BJ (cell line): ENCODE measurements at regions of chr14 and their contacts with region 1.

Region 1: DNA sequence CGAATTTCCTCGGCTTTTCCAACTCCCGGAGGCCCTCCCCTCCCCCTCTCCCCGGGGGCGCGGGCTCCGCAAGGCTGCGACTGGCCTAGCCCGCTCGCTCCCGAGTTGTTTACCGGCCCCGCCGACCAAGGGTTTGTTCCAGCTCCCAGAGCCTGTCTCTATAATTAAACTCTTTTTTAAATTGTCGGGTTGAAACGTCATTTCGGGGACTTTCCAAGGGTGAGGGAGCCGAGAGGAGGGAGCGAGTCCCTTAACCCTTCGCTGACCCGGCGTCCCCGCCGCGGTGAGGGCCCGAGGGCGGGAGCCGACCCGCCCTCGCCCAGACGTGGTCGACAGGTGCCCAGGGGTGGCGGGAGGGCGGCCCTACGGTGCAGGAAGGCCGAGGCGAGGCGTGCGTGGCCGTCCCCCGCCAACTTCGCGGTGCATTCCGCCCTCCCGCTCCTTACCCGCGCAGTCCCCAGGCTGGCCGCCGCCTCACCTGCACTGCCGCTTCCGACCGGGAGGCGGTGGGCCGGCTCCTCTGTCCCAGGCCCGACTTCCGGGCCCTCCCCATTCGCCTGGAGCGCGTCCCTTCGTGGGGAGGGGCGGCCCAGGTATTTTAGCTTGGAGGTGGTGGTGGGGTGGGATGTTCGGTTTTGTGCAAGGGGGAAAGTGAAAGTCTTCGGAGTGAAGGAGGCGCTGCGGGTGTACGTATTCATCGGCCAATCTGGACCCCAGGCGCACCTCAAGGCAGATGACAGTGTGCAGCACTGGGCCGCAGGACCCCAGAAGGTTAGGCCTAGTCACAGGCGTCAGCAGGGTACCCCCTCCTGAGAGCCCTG is 2.9 kb upstream of the ZFP36L1 start:
- DNase-seq: no peak
- H3K4me3 ChIP-seq: peak overlapping the region; percentile 60
- H3K27me3 ChIP-seq: no peaks in the 10 kb centered on the region
- CTCF ChIP-seq: peak; percentile 79

Region 2: DNA sequence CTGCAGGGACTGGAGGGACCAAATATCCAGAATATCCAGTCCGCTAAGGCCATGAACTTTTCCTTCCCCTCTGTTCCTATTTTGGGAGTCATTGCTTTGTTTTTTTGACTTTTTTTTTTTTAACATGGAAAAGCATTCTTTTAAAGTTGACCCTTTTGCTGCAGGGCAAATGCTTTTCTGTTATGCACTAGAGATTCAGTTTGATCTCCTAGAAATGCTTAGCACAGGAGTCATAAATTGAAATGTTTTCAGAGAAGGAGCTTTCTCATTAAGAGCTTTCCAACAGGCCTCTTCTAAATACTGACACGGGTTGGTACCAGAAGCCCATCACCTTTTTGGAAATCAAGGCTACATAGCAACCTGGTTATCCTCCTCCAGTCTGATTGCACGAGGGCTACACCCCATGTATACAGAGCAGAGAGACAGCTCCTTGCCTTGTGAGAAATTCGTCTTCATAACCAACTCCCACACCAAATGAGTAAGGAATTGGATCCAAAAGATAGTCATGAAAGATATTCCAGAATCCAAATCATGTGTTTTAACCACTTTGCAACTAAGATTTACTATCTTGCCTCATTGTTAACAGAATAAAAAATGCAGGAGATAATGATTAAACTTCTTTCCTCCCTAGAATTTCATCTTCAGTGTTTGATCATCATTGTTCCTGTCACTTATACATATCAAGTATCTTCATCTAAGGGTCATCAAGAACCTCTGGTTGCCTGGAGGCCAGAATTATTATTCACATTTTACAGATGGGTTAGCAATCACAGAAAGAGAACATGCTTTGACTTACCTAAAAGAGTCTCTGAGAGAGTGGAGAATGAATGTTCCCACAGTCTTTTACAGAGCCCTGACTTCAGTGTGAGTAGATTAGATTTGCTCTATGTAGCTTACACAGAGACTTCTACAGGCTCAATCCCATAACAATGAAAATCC is 392.3 kb before region 1 on chr14:
- CTCF ChIA-PET with region 1: no interaction called
- POLR2A ChIA-PET with region 1: interaction called, 11 read pairs
- DNase-seq: peak; percentile 50
- H3K4me3 ChIP-seq: no peak overlapping the region
- H3K27me3 ChIP-seq: no peaks in the 10 kb centered on the region
- CTCF ChIP-seq: no peak

Region 3: GRCh38 chr14:68695326-68695768 is 100.5 kb before region 1 on chr14:
- CTCF ChIA-PET with region 1: no interaction called
- POLR2A ChIA-PET with region 1: interaction called, 19 read pairs
- DNase-seq: peak; percentile 99
- H3K4me3 ChIP-seq: no peak overlapping the region
- H3K27me3 ChIP-seq: no peaks in the 10 kb centered on the region
- CTCF ChIP-seq: no peak

Region 4: DNA sequence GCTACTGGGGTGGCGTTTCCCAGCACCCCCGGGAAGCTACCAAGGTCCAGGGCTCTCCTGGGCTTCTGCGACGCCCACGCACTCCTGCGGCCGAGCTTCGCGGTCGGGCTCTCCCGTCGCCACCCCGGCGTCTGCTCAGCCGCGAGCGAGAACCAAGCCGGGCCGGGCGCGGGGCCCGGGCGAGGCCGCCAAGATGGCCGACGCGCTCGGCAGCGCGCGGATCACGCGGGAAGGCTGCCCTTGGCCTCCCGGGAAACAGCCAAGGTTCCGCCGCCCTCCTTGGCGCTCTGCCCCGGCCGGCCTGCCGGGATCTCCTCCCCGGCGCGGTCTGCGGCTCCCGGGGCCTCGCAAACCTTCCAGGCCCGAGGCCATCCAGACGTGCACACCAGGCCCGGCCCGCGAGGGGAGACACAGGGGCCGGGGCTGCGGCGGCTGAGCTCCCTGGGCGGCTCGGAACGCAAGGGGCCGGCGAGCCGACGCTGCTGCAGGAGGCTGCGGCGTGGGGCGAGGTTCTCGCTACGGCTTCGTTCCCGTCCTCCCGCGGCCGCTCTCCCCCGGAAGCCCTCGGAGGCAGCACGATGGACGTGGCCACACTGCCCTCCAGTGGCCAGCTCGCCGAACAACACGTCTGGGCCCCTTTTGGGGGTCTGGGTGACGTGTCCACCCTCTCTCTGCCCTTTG is 20.6 kb after region 1 on chr14:
- CTCF ChIA-PET with region 1: interaction called, 13 read pairs
- POLR2A ChIA-PET with region 1: interaction called, 10 read pairs
- DNase-seq: no peak
- H3K4me3 ChIP-seq: peak overlapping the region; percentile 41
- H3K27me3 ChIP-seq: no peaks in the 10 kb centered on the region
- CTCF ChIP-seq: peak; percentile 92